ENCODE measurements at regions of chr14 and their contacts with region 1.

Region 1: GRCh38 chr14:89416002-89416995 is 734 bp downstream of the FOXN3 start:
- DNase-seq: peak; percentile 98
- H3K4me3 Mint-ChIP-seq: peak overlapping the region; percentile 85
- H3K27ac Mint-ChIP-seq: peak overlapping the region; percentile 51
- H3K4me1 Mint-ChIP-seq: peaks cover 15% of the 10 kb centered on the region
- H3K27me3 Mint-ChIP-seq: no peaks in the 10 kb centered on the region
- CTCF ChIP-seq: no peak

Region 2: GRCh38 chr14:89214221-89214936 is 201.9 kb before region 1 on chr14:
- CTCF ChIA-PET with region 1: no interaction called
- intact Hi-C with region 1: loop called (anchors 10 kb)
- DNase-seq: peak; percentile 43
- H3K4me3 Mint-ChIP-seq: no peak overlapping the region
- H3K27ac Mint-ChIP-seq: no peak overlapping the region
- H3K4me1 Mint-ChIP-seq: peaks cover 12% of the 10 kb centered on the region
- H3K27me3 Mint-ChIP-seq: no peaks in the 10 kb centered on the region
- CTCF ChIP-seq: no peak